A549 (cell line): ENCODE measurements at regions of chr6 and their contacts with region 1.

Region 1: DNA sequence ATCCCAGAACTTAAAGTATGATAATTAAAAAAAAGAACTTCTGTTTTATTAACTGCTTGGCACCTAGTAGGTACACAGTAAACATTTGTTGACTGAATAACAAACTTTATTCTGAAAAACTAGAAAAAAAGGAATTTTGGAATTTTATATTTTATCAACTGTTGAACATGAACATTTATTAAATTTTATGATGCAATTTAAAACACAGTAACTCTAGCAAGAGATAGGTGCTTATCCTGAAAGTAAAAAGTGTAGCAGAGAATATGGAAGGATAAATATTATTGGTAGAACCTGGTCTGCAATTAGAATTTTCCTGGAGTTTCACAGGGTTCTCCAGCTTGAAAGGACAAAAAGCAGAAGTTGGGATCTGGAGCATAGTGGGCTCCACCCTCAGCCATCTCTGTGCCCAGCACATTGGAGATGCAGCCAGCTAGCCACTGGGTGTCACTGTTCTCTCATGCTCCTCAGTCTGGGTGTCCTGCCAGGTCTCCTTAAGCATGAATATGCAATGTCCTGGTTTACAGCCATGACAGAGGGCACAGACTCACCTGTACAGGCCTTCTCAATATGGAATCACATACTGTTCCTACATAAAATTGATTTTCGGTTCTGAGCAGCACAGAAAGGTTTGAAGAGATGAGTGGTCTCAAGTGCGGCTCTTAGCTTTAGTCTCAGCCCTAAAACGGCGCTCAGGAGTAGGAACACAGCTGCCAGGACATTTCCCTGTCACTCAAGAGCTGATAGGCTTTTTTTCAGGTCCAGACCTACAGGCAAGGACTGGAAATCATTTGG is 31.7 kb upstream of the IL20RA start:
- DNase-seq: peak; percentile 28 to 71
- ATAC-seq: peak; percentile 99 to 100
- H3K4me3 ChIP-seq: no peak overlapping the region
- H3K27ac ChIP-seq: no peak overlapping the region
- H3K4me1 ChIP-seq: no peaks in the 10 kb centered on the region
- CTCF ChIP-seq: peak; percentile 68
- EP300 ChIP-seq: no peak
- POLR2A ChIP-seq: no peak
- RAD21 ChIP-seq: peak; percentile 80

Region 2: DNA sequence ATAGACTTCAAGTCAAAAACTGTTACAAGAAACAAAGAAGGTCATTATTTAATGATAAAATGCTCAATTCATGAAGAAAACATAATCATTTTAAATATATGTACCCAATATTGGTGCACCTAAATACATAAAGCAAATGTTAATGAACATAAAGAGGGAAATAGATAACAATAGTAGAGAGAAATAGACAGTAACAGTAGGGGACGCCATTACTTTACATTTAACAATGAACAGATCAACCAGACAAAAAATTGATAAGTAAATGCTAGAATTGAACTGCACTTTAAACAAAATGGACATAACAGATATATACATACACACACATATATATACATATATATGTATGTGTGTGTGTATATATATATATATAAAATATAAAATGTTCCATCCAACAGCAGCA is 59.6 kb after region 1 on chr6:
- CTCF ChIA-PET with region 1: no interaction called
- POLR2A ChIA-PET with region 1: no interaction called
- DNase-seq: no peak
- ATAC-seq: no peak
- H3K4me3 ChIP-seq: no peak overlapping the region
- H3K27ac ChIP-seq: no peak overlapping the region
- H3K4me1 ChIP-seq: no peaks in the 10 kb centered on the region
- CTCF ChIP-seq: peak; percentile 20; the same call in 1 of the 3 replicates
- EP300 ChIP-seq: no peak
- POLR2A ChIP-seq: no peak
- RAD21 ChIP-seq: peak in 1 of 2 experiments; percentile 38; a peak in 4 of 5 replicates

Region 3: DNA sequence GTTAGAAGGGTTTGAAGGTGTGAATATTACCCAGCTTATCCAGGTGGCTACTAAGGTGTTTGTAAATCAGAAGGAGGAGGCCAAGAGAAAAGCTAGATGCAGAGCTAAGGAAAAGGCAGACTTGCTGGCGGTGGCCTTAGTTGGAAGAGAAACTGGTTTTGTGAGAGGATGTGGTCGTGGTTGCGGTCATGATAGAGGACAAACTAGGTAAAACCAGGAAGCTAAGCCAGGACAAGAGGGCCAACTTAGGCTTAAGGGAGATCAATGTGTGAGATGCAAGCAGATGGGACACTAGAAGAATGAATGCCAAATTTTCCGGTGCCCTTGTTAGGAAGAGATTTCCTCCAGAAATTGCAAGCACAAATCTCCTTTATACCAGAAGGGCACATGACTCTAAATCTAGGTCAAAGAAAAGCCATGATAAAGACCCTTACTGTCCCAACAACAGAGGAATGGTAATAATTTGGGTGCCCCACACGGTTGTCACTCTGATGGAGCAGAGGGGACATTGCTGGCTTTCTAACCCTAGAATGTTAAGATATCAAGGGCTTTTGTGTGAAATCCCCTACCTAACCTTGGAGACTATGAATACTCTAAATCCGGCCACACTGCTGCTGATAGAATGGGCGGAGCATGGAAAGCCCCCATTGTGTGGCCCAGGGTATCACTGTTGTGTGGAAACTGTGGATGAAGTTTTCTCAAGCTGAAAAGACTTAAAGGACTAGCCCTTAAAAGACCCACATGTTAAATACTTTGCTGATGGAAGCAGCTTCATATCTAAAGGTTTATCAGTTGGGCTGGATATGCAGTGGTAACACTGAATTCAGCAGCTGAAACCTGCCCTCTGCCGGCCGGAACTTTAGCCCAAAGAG is 89.1 kb after region 1 on chr6:
- CTCF ChIA-PET with region 1: interaction called, 10 read pairs
- POLR2A ChIA-PET with region 1: no interaction called
- DNase-seq: peak; percentile 15 to 37
- ATAC-seq: peak; percentile 74 to 83; a peak in 4 of 6 replicates
- H3K4me3 ChIP-seq: no peak overlapping the region
- H3K27ac ChIP-seq: 0 out of 6 replicates have a peak overlapping the region, but pooled peaks of 1 of the 2 experiments have one; percentile 49
- H3K4me1 ChIP-seq: peaks cover 16% of the 10 kb centered on the region
- CTCF ChIP-seq: peak; percentile 40
- EP300 ChIP-seq: no peak
- POLR2A ChIP-seq: no peak
- RAD21 ChIP-seq: peak; percentile 50 to 63